ENCODE measurements at regions of chr1 and their contacts with region 1.

Region 1: DNA sequence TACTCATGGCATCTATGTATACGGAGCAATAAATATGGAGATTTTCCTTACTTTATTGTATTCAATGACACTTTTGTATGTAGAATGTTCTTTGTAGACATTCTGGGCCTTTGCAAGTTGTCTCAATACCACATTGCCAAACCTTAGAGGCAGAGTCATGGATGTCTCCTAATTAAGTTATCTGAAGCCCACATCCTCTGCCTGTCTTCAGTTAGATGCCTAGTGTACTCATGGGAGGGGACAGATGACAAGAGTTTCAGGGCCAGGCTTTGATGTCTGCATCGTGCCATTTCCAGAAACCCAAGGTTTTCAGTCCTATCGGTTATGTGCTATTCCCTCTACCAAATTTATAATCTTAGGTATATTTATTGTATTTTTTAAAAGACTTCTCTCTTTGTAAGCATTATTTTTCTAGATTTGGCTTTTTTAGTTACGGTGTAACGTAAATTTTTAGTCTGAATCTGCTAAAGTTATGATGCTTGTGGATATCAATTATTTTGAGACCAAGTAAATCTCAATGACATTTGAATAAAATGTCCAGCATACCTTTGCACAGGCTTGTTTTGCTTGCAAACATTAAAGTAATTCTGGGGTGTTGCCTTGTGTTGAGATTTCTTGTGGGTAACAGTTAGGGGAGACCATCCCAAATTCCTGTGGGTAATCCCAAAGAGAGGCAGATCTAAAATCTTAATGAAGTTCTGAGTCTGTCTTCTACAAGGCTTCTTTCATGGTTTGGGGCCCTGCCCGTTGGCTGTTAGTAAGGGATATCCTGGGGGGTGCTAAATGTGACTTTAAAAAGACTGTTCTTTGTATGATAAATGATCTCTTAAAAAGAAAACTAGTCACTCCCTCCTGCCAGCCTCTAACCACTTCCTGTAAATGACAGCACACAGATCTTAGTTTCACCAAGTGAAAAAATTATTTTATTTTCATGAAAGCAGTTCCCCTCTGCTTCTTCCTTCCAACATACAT is 8.0 kb upstream of the MACF1 start:
- DNase-seq: no peak
- H3K4me3 ChIP-seq: no peak overlapping the region
- H3K27ac ChIP-seq: no peak overlapping the region
- H3K4me1 ChIP-seq: peaks cover 0 to 3% (median 1%) of the 10 kb centered on the region in 4 experiments; a peak in 2 of 7 replicates
- H3K27me3 ChIP-seq: no peaks in the 10 kb centered on the region
- CTCF ChIP-seq: no peak
- EP300 ChIP-seq: no peak
- POLR2A ChIP-seq: no peak
- RAD21 ChIP-seq: no peak

Region 2: GRCh38 chr1:39044762-39045161 is 151.8 kb before region 1 on chr1:
- CTCF ChIA-PET with region 1: no interaction called
- POLR2A ChIA-PET with region 1: no interaction called
- DNase-seq: no peak
- H3K4me3 ChIP-seq: no peak overlapping the region
- H3K27ac ChIP-seq: no peak overlapping the region
- H3K4me1 ChIP-seq: no peaks in the 10 kb centered on the region
- H3K27me3 ChIP-seq: no peaks in the 10 kb centered on the region
- CTCF ChIP-seq: no peak
- EP300 ChIP-seq: no peak
- POLR2A ChIP-seq: no peak
- RAD21 ChIP-seq: no peak

Region 3: GRCh38 chr1:39098546-39099250 is 97.8 kb before region 1 on chr1:
- CTCF ChIA-PET with region 1: interaction called, 130 read pairs
- POLR2A ChIA-PET with region 1: interaction called, 12 read pairs
- DNase-seq: peak; percentile 75 to 89
- H3K4me3 ChIP-seq: no peak overlapping the region
- H3K27ac ChIP-seq: peak overlapping the region; percentile 21; the same call in 1 of the 2 replicates
- H3K4me1 ChIP-seq: peaks cover 7 to 13% (median 12%) of the 10 kb centered on the region in 4 experiments
- H3K27me3 ChIP-seq: no peaks in the 10 kb centered on the region
- CTCF ChIP-seq: peak; percentile 40 to 88 (median 88)
- EP300 ChIP-seq: peak in 1 of 2 experiments; percentile 39; a peak in 1 of 3 replicates
- POLR2A ChIP-seq: no peak
- RAD21 ChIP-seq: peak; percentile 98 to 99

Region 4: DNA sequence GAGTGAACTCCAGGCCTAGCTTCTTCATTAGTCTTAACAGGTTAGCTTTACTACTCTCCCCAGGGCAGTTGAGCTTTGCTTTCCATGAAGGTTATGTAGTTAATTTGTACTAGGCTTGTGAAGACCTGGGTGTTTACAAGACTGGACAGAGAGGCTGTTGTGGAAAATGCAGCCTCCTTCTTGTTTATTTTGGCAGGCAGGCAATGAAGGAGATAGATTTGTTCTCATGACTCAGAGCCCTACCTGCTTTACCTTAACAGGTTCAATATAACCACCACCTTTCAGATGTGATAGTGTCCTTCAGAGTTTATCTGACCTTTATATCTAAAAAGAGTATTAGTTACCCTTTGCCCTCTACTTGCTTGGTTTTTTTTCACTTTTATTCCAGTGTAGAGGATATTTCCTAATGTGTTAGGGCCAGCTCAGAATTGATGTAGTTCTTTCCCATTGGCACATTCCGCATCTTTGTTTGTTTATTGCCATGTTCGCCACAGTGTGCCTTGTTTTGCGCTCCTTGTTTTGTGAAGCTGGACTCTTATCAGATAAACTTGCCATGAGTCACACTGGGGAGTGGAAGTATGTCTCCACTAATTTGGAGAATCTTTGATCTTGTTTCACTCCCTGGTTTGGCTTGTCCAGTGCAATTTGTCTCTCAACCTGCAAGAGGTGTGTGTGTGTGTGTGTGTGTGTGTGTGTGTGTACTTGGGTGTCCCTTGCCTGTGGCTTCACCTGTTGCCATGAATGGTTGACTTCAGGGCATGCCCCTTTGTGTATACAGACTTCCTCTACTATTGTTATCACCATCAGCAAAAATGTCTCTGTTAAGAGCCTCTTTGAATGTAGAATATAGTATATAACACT is 79.4 kb before region 1 on chr1:
- CTCF ChIA-PET with region 1: interaction called, 79 read pairs
- POLR2A ChIA-PET with region 1: interaction called, 3 read pairs
- DNase-seq: no peak
- H3K4me3 ChIP-seq: no peak overlapping the region
- H3K27ac ChIP-seq: no peak overlapping the region
- H3K4me1 ChIP-seq: peaks cover 0 to 3% (median 2%) of the 10 kb centered on the region in 4 experiments; a peak in 5 of 7 replicates
- H3K27me3 ChIP-seq: no peaks in the 10 kb centered on the region
- CTCF ChIP-seq: no peak
- EP300 ChIP-seq: no peak
- POLR2A ChIP-seq: no peak
- RAD21 ChIP-seq: no peak

Region 5: DNA sequence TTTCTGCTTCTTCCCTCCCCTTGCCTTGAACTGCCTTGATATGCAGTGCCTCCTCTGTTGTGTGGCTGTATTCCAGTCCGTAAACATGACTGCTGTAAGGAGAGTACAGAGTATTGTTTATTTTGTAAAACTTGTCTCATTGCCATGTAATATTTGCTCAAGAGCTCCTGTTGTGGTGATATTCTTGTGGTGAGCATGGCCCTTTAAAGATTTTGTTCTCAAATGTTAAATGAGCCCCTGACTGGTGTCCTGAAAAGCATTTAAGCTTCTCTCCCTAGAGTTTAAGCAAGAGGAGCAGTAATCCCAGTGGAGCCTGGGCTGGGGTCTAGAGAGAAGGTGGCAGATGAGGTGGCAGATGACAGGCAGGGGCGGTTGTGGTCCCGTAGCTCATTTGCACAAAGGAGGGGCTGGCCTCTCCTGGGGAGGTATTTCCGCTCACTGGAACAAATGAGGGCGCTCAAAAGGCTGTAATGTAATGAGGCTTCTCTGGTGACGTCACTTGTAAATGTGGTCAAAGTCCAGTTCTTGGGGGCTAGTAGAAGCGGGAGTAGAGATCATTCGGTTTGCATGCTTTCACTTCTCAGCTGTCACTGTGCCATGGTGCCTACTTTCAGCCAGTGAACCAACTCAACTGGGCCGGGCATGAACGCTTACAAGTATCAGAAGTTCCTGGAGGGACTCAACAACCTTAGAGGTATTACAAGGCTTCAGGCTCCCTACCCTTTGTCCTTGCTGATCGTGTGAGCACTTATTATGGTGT is 38.0 kb before region 1 on chr1:
- CTCF ChIA-PET with region 1: interaction called, 97 read pairs
- POLR2A ChIA-PET with region 1: interaction called, 8 read pairs
- DNase-seq: no peak
- H3K4me3 ChIP-seq: peak overlapping the region; percentile 21 to 44 (median 34); a peak in 7 of 8 replicates
- H3K27ac ChIP-seq: peak overlapping the region; percentile 48
- H3K4me1 ChIP-seq: peaks cover 13 to 37% (median 25%) of the 10 kb centered on the region in 4 experiments; a peak in 6 of 7 replicates
- H3K27me3 ChIP-seq: no peaks in the 10 kb centered on the region
- CTCF ChIP-seq: peak in 1 of 3 experiments; percentile 1; a peak in 1 of 4 replicates
- EP300 ChIP-seq: no peak
- POLR2A ChIP-seq: peak in 1 of 2 experiments; percentile 62; a peak in 1 of 3 replicates
- RAD21 ChIP-seq: no peak

Region 6: DNA sequence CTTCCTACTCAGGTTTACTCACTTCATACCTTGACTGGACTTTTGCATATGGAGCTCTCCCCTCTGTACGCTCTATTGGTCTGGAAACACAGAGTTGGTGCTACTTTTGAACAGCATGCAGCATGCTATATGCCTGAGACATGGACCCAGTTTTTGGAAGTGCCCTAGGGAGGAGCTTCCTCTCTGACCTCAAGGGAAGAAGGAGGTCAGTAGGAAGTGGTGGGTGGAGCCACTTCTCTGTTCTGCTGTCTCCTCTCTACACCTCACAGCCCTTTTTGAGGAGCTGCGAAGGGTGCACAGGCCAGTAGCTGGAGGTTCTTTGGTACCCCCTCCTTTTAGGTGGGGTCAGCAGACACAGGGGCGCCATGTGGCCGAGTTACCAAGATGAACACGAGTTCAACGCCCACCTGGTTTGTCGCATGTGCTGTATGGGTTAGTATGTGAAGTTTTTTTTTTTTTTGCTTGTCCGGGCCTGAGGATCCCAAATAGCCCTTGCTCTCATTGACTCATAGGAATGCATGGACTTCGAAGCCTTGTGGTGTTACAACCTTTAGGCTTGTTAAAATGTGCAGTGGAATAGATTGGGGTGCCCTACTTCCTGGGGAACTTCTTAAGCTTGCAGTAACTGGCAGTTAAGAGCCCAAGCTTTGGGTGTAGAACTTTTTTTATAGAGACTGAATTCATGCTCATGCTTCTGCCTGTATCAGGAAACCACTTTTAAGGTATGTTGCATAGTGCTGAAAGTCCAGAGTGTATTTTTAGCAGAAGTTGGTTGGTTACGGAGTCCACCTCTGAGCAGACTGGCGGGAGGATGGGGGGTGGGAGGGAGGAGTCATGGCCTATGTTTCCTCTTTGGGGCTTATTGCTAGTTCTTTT is 18.7 kb after region 1 on chr1:
- CTCF ChIA-PET with region 1: interaction called, 72 read pairs
- POLR2A ChIA-PET with region 1: interaction called, 22 read pairs
- DNase-seq: peak in 1 of 2 experiments; percentile 47
- H3K4me3 ChIP-seq: no peak overlapping the region
- H3K27ac ChIP-seq: no peak overlapping the region
- H3K4me1 ChIP-seq: peaks cover 10 to 23% (median 13%) of the 10 kb centered on the region in 4 experiments
- H3K27me3 ChIP-seq: no peaks in the 10 kb centered on the region
- CTCF ChIP-seq: no peak
- EP300 ChIP-seq: no peak
- POLR2A ChIP-seq: no peak
- RAD21 ChIP-seq: no peak

Region 7: DNA sequence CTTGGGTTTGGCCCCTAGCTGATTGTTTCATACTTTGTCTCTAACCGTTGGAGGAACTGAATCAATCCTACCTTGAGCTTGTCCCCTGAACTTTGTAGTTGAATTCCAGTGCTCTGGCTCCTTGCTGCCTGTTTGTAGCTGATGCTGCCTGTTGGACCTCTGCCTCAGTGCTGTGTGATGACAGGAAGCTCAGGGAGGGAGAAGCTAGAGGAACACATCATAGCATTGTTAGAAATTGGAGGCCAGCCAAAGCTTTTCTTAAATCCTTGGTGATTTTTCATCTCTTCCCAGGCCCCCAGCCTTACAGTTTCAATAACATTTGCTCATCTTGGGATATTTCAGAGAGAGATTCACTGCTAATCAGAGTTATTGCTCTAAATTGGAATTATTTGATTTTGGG is 41.9 kb after region 1 on chr1:
- CTCF ChIA-PET with region 1: interaction called, 32 read pairs
- POLR2A ChIA-PET with region 1: no interaction called
- DNase-seq: no peak
- H3K4me3 ChIP-seq: no peak overlapping the region
- H3K27ac ChIP-seq: no peak overlapping the region
- H3K4me1 ChIP-seq: no peaks in the 10 kb centered on the region
- H3K27me3 ChIP-seq: no peaks in the 10 kb centered on the region
- CTCF ChIP-seq: no peak
- EP300 ChIP-seq: no peak
- POLR2A ChIP-seq: no peak
- RAD21 ChIP-seq: no peak

Region 8: DNA sequence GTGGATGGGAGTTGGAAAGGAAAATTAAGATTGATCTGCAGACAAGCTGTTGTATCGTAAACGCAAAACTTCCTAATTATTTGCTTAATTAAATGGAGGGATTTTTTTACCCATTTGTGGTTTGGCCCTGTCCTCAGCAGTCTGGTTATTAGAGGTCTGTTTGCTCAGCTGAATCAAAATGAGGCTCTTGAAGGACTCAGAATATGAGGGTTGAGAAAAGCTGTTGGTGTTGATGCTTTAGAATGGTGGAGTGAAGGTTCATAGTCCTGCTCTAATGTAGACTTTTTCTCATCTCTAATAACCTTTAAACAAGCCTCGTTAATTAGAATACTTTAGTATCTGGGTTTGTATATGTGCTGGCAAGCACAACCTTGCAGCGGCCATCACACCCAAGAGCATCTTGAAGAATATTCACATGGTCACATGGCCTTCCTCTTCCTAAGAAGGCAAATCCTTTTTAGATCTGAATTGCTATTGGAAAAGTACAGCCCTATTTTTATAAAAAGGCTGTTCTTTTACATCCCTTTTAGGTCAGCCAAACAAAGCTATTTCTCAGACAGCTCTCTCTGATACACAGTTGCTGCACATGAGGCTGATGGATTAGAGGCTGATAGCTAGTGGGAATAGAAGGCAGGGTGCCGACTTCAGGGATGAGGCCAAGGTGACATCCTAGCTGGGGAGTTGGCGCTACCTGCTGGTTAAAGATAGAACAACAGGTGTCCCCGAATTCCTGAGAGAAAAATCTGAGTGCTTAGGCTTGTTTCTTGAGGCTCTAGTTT is 61.8 kb after region 1 on chr1:
- CTCF ChIA-PET with region 1: interaction called, 157 read pairs
- POLR2A ChIA-PET with region 1: interaction called, 5 read pairs
- DNase-seq: peak; percentile 47 to 89
- H3K4me3 ChIP-seq: no peak overlapping the region
- H3K27ac ChIP-seq: no peak overlapping the region
- H3K4me1 ChIP-seq: peaks cover 0 to 2% (median 0%) of the 10 kb centered on the region in 4 experiments; a peak in 1 of 7 replicates
- H3K27me3 ChIP-seq: no peaks in the 10 kb centered on the region
- CTCF ChIP-seq: peak; percentile 65 to 95 (median 89)
- EP300 ChIP-seq: no peak
- POLR2A ChIP-seq: no peak
- RAD21 ChIP-seq: peak; percentile 98 to 99

Region 9: GRCh38 chr1:39418236-39418635 is 221.7 kb after region 1 on chr1:
- CTCF ChIA-PET with region 1: no interaction called
- POLR2A ChIA-PET with region 1: no interaction called
- DNase-seq: no peak
- H3K4me3 ChIP-seq: no peak overlapping the region
- H3K27ac ChIP-seq: no peak overlapping the region
- H3K4me1 ChIP-seq: peaks cover 0 to 3% (median 3%) of the 10 kb centered on the region in 4 experiments; a peak in 4 of 7 replicates
- H3K27me3 ChIP-seq: no peaks in the 10 kb centered on the region
- CTCF ChIP-seq: no peak
- EP300 ChIP-seq: no peak
- POLR2A ChIP-seq: no peak
- RAD21 ChIP-seq: no peak

Measured in H1 (cell line).